GM12878 (cell line): ENCODE measurements at regions of chr4 and their contacts with region 1.

Region 1: DNA sequence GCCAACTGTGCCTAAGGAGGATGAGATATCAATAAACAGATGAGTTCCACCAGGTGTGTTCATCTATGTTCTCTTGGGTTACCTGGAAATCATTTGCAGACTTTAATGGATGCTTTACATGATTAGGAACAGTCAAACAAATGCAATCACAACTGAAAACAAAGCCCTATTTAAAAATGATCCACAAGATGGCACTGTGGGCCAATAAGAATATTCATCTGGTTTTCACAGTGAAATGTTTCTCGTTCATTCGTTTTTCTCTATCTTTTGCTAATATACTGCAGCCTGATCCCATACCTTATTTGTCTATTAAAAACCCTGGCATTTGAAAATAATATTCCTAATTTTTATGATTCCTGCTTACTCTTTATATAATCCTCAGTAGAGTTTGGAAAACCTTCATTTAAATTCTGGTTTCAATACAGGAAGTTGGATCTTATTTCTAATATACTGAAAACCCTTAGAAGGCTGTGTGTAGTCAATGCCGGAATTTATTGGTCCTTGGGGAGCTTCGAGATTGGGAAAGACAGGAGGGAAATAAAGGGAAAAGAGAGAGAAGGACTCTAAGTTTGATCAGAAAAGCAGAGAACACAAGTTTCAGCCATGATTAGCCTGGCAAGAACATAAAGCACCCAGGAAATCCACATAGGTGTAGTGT is 63.8 kb upstream of the TAPT1 start:
- DNase-seq: no peak
- ATAC-seq: peak; percentile 64
- H3K4me3 ChIP-seq: no peak overlapping the region
- H3K27ac ChIP-seq: no peak overlapping the region
- H3K4me1 ChIP-seq: no peaks in the 10 kb centered on the region
- H3K27me3 ChIP-seq: peaks cover 0 to 2% of the 10 kb centered on the region in 2 experiments; a peak in 1 of 4 replicates
- CTCF ChIP-seq: peak; percentile 36 to 59 (median 44); a peak in 4 of 6 replicates
- EP300 ChIP-seq: no peak
- POLR2A ChIP-seq: no peak
- RAD21 ChIP-seq: peak; percentile 68

Region 2: DNA sequence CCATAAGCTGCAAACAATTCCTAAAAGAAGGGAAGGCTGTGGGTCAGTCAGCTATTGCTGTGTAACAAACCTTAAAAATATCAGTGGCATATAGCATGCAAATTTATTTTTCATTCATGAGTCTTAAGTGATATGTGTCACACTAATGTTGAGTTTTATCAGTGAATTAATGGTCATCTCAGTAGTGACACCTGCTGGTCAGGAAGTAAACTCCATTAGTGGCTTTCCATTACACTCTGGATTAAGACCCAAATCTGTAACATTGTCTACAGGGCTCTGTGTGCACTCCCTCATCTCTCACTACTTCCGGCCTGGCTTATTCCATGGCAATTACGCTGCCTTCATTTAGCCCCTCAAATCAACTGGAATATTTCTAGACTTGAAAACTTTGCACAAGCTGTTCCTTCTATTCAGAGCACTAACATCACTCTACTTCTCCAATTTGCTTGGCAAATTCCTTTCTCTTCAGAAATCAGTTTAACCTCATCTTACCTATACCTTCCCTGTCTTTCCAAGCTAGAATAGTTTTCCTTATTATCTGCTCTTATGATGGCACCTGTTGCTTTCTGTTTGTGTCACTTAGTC is 153.6 kb after region 1 on chr4:
- CTCF ChIA-PET with region 1: interaction called, 12 read pairs
- POLR2A ChIA-PET with region 1: no interaction called
- RAD21 ChIA-PET with region 1: interaction called, 3 read pairs
- SMC1A ChIA-PET with region 1: interaction called, 6 read pairs
- in situ Hi-C with region 1: no loop called
- intact Hi-C with region 1: loop called (anchors 1 kb)
- DNase-seq: no peak
- ATAC-seq: peak; percentile 78
- H3K4me3 ChIP-seq: no peak overlapping the region
- H3K27ac ChIP-seq: no peak overlapping the region
- H3K4me1 ChIP-seq: no peaks in the 10 kb centered on the region
- H3K27me3 ChIP-seq: no peaks in the 10 kb centered on the region
- CTCF ChIP-seq: peak; percentile 52 to 70 (median 55)
- EP300 ChIP-seq: no peak
- POLR2A ChIP-seq: no peak
- RAD21 ChIP-seq: peak; percentile 39; the same call in 1 of the 2 replicates

Region 3: DNA sequence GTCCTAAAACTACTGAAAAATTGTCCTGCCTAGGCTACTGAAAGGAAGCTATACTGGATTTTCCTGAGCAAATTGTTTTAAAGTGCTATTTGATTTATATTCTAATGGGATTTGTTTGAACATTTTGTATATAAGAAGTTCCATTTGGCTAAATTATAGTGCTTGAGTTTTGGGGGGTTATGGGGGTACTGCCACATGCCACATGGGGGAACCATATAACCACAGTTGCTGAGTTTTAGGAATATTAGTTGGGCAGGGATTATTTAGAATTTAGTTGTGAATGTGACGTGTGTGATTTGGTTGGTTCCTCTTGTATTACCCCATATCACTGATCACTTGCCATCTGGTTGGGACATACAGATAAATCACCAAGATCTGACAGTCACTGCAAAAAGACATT is 160.7 kb after region 1 on chr4:
- CTCF ChIA-PET with region 1: interaction called, 3 read pairs
- POLR2A ChIA-PET with region 1: no interaction called
- RAD21 ChIA-PET with region 1: no interaction called
- SMC1A ChIA-PET with region 1: interaction called, 6 read pairs
- in situ Hi-C with region 1: loop called (anchors 5 kb)
- intact Hi-C with region 1: no loop called
- DNase-seq: no peak
- ATAC-seq: no peak
- H3K4me3 ChIP-seq: no peak overlapping the region
- H3K27ac ChIP-seq: no peak overlapping the region
- H3K4me1 ChIP-seq: no peaks in the 10 kb centered on the region
- H3K27me3 ChIP-seq: no peaks in the 10 kb centered on the region
- CTCF ChIP-seq: no peak
- EP300 ChIP-seq: no peak
- POLR2A ChIP-seq: no peak
- RAD21 ChIP-seq: no peak

Region 4: GRCh38 chr4:16916719-16917337 is 626.8 kb after region 1 on chr4:
- CTCF ChIA-PET with region 1: no interaction called
- POLR2A ChIA-PET with region 1: no interaction called
- RAD21 ChIA-PET with region 1: no interaction called
- SMC1A ChIA-PET with region 1: no interaction called
- in situ Hi-C with region 1: no loop called
- intact Hi-C with region 1: loop called (anchors 5 kb)
- DNase-seq: peak; percentile 47
- ATAC-seq: peak; percentile 100
- H3K4me3 ChIP-seq: no peak overlapping the region
- H3K27ac ChIP-seq: no peak overlapping the region
- H3K4me1 ChIP-seq: no peaks in the 10 kb centered on the region
- H3K27me3 ChIP-seq: no peaks in the 10 kb centered on the region
- CTCF ChIP-seq: peak; percentile 96 to 98 (median 97)
- EP300 ChIP-seq: no peak
- POLR2A ChIP-seq: no peak
- RAD21 ChIP-seq: peak; percentile 66

Region 5: GRCh38 chr4:17468371-17469221 is 1178.6 kb after region 1 on chr4:
- CTCF ChIA-PET with region 1: interaction called, 7 read pairs
- POLR2A ChIA-PET with region 1: no interaction called
- RAD21 ChIA-PET with region 1: interaction called, 3 read pairs
- SMC1A ChIA-PET with region 1: interaction called, 4 read pairs
- in situ Hi-C with region 1: loop called (anchors 5 kb)
- intact Hi-C with region 1: loop called (anchors 10 kb)
- DNase-seq: no peak
- ATAC-seq: no peak
- H3K4me3 ChIP-seq: no peak overlapping the region
- H3K27ac ChIP-seq: no peak overlapping the region
- H3K4me1 ChIP-seq: no peaks in the 10 kb centered on the region
- H3K27me3 ChIP-seq: no peaks in the 10 kb centered on the region
- CTCF ChIP-seq: peak in 2 of 3 experiments; percentile 25 to 35; a peak in 3 of 6 replicates
- EP300 ChIP-seq: no peak
- POLR2A ChIP-seq: no peak
- RAD21 ChIP-seq: peak; percentile 22; the same call in 1 of the 2 replicates